Heart right ventricle (tissue), 16 donors: ENCODE measurements at regions of chr10 and their contacts with region 1.

Region 1: GRCh38 chr10:46234431-46235060 is 52.3 kb upstream of the ANTXRL start:
- DNase-seq: peak in 1 of 2 donors; percentile 2
- ATAC-seq: peak in 1 of 8 donors; percentile 9
- H3K4me3 ChIP-seq: no peak overlapping the region
- H3K27ac ChIP-seq: no peak overlapping the region
- H3K4me1 ChIP-seq: no peaks in the 10 kb centered on the region
- H3K27me3 ChIP-seq: peaks cover 0 to 14% (median 0%) of the 10 kb centered on the region in 7 donors
- CTCF ChIP-seq: no peak

Region 2: DNA sequence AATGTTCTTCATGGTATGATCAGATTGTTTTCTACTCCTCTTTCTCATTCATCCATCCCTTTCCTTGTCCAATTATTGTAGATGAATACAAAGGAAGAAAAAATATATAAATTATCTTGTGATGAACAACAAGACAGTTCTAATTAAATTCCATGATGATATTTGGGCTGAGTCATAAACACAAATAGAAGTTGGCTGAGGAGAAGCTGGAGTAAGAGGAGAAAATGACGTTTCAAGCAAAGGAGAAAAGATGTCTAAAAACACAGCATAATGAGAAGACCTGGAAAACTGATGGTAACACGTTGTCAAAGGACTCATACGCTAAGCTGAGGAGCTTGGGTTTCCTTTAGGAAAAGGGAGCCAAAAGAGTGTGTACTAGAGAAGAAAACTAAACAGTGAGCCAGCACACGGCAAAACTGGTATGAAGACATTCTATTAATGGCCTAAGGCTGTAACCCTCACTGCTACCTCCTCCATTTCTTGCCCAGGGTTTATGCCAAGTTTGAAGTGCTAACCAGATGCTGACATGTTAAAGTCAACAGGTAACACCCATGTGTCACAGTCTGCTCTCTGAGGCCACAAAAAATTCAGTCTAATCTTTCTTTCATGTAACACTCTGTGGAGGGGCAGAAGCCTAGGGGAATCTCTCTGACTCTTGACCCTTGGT is 588.0 kb before region 1 on chr10:
- intact Hi-C with region 1: no loop called
- DNase-seq: no peak
- ATAC-seq: peak in 5 of 8 donors; percentile 49 to 85 (median 57)
- H3K4me3 ChIP-seq: no peak overlapping the region
- H3K27ac ChIP-seq: peak overlapping the region in 6 of 10 donors; percentile 2 to 54 (median 26)
- H3K4me1 ChIP-seq: peaks cover 0 to 12% (median 0%) of the 10 kb centered on the region in 9 donors
- H3K27me3 ChIP-seq: no peaks in the 10 kb centered on the region
- CTCF ChIP-seq: no peak

Region 3: GRCh38 chr10:46247808-46248569 is 13.4 kb after region 1 on chr10:
- intact Hi-C with region 1: loop called in 1 of 10 experiments (anchors 1 kb)
- DNase-seq: peak in 1 of 2 donors; percentile 45
- ATAC-seq: peak in 6 of 8 donors; percentile 60 to 83 (median 64)
- H3K4me3 ChIP-seq: no peak overlapping the region
- H3K27ac ChIP-seq: no peak overlapping the region
- H3K4me1 ChIP-seq: peaks cover 0 to 15% (median 7%) of the 10 kb centered on the region in 9 donors
- H3K27me3 ChIP-seq: no peaks in the 10 kb centered on the region
- CTCF ChIP-seq: no peak

Region 4: GRCh38 chr10:46325023-46325422 is 90.5 kb after region 1 on chr10:
- intact Hi-C with region 1: loop called in 5 of 10 experiments (anchors 2 to 10 kb)
- DNase-seq: no peak
- ATAC-seq: peak in 1 of 8 donors; percentile 41
- H3K4me3 ChIP-seq: no peak overlapping the region
- H3K27ac ChIP-seq: no peak overlapping the region
- H3K4me1 ChIP-seq: no peaks in the 10 kb centered on the region
- H3K27me3 ChIP-seq: peaks cover 0 to 13% (median 0%) of the 10 kb centered on the region in 7 donors
- CTCF ChIP-seq: peak in 7 of 9 donors; percentile 31 to 60 (median 42)

Region 5: GRCh38 chr10:47047671-47048525 is 813.4 kb after region 1 on chr10:
- intact Hi-C with region 1: no loop called
- DNase-seq: peak; percentile 70 to 79
- ATAC-seq: peak in 7 of 8 donors; percentile 53 to 76 (median 69)
- H3K4me3 ChIP-seq: no peak overlapping the region
- H3K27ac ChIP-seq: no peak overlapping the region
- H3K4me1 ChIP-seq: peaks cover 0 to 12% (median 0%) of the 10 kb centered on the region in 9 donors
- H3K27me3 ChIP-seq: no peaks in the 10 kb centered on the region
- CTCF ChIP-seq: peak; percentile 78 to 93 (median 85)